ENCODE measurements at regions of chr20 and their contacts with region 1.

Region 1: GRCh38 chr20:41339507-41340326 is 904 bp upstream of the LPIN3 start:
- DNase-seq: peak; percentile 60 to 71
- ATAC-seq: peak; percentile 73 to 74
- H3K4me3 ChIP-seq: peak overlapping the region; percentile 23 to 52 (median 40)
- H3K27ac ChIP-seq: peak overlapping the region; percentile 65 to 77 (median 70)
- H3K4me1 ChIP-seq: peaks cover 6 to 8% of the 10 kb centered on the region in 2 donors
- H3K27me3 ChIP-seq: no peaks in the 10 kb centered on the region
- CTCF ChIP-seq: peak; percentile 98 to 100 (median 99)
- POLR2A ChIP-seq: no peak

Region 2: GRCh38 chr20:40990542-40991120 is 349.1 kb before region 1 on chr20:
- in situ Hi-C with region 1: loop called in 3 of 4 experiments (anchors 25 kb)
- intact Hi-C with region 1: loop called (anchors 5 kb)
- DNase-seq: peak; percentile 52 to 66
- ATAC-seq: peak; percentile 96 to 98
- H3K4me3 ChIP-seq: no peak overlapping the region
- H3K27ac ChIP-seq: no peak overlapping the region
- H3K4me1 ChIP-seq: no peaks in the 10 kb centered on the region
- H3K27me3 ChIP-seq: no peaks in the 10 kb centered on the region
- CTCF ChIP-seq: peak; percentile 34 to 83 (median 75)
- POLR2A ChIP-seq: no peak

Region 3: DNA sequence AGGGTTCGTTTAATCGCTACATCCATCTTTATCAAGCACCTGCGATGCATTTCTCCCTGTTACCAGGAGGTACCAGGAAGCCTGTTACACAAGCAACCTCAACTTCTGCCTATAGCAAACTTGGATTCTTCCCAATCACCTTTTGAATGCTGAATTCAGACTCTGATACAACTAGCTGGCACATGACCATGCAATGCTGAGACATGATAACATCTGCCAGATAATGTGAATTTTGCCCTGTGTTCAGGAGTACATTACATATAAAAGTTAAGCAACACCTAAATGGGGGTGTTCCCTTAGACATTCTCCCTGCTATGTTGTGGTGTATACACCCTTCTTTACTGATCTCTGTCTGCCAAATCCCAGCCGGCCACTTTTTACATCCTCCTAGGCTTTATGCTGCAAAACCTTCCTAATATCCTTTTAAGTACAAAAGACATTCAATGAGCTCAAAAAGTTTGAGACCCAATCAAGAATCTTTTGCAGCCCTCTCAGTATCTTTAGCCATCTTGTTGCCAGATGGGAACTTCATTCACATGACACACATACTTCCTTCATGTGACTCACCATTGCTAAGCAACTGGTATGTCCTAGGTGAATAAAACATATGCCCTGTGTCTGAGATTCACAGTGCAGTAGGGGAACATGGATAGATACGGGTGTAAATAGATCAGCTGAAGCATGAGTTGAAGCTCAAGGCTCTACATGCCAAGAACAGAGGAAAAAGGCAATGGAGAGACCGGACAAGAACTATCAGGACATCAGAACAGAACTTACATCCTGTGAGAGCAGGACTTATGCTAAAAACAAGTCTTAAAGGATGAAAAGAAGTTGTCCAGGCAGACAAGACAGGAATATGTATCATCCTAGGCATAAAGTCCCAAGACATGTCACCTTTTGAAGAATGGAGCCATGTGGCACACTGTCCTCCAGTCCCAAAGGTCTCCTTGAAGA is 106.5 kb before region 1 on chr20:
- in situ Hi-C with region 1: loop called in 2 of 4 experiments (anchors 5 to 10 kb)
- intact Hi-C with region 1: loop called (anchors 1 kb)
- DNase-seq: no peak
- ATAC-seq: peak; percentile 54 to 72
- H3K4me3 ChIP-seq: peak overlapping the region in 3 of 4 donors; percentile 20 to 39 (median 28)
- H3K27ac ChIP-seq: peak overlapping the region; percentile 78 to 91 (median 86)
- H3K4me1 ChIP-seq: peaks cover 65% of the 10 kb centered on the region in 2 donors
- H3K27me3 ChIP-seq: no peaks in the 10 kb centered on the region
- CTCF ChIP-seq: no peak
- POLR2A ChIP-seq: no peak

Region 4: DNA sequence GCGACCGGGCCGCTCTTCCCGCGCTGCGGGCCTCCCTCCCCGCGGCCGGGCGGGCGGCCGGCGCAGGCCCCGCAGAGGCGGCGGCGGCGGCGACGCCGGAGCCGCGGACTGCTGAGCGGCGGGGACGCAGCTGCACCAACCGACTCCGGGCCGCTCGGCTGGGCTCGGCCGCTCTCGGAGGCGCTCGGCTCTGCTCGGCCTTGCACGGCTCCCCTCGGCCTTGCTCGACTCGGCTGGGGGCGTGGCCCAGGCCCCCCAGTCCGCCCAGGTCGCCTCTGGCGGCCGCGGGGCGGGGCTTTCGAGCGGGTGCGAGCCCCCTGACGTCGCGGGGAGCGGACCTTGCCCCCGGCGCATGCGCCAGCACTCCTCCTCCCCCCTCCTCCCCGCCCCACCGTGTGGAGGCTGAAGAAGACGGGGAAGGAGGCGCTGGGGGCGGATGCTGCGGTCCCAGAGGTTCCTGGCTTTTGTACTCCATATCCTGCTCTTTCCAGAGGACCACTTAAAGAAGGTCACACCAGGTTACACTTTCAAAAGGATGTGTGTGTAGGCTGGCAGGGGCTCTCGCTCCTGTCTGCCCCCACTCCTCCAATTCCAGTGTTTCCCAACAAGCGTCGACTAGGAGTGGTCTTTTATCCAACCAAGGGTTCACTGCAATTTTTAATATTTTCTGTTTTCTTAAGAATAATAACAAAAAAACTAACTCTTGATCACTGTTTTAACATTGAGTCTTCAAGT is 22.0 kb before region 1 on chr20 and contains the start of gene ZHX3:
- in situ Hi-C with region 1: no loop called
- intact Hi-C with region 1: loop called (anchors 2 kb)
- DNase-seq: peak; percentile 92 to 95
- ATAC-seq: peak; percentile 89
- H3K4me3 ChIP-seq: peak within 1 kb of the TSS; percentile 77 to 95 (median 80)
- H3K27ac ChIP-seq: peak within 1 kb of the TSS; percentile 84 to 96 (median 91)
- H3K4me1 ChIP-seq: peaks cover 37 to 40% of the 10 kb centered on the region in 2 donors
- H3K27me3 ChIP-seq: no peaks in the 10 kb centered on the region
- CTCF ChIP-seq: no peak
- POLR2A ChIP-seq: peak; percentile 70 to 85
- total RNA-seq, gene ZHX3: 20.1 to 30.0 (median 25.9) TPM

Region 5: GRCh38 chr20:41693136-41693979 is 353.6 kb after region 1 on chr20:
- in situ Hi-C with region 1: loop called in 1 of 4 experiments (anchors 10 kb)
- intact Hi-C with region 1: no loop called
- DNase-seq: peak; percentile 78 to 84
- ATAC-seq: peak; percentile 91 to 94
- H3K4me3 ChIP-seq: peak overlapping the region; percentile 77 to 92 (median 78)
- H3K27ac ChIP-seq: peak overlapping the region; percentile 83 to 97 (median 91)
- H3K4me1 ChIP-seq: peaks cover 10 to 15% of the 10 kb centered on the region in 2 donors
- H3K27me3 ChIP-seq: no peaks in the 10 kb centered on the region
- CTCF ChIP-seq: peak in 4 of 5 experiments; percentile 22 to 68 (median 58)
- POLR2A ChIP-seq: peak; percentile 68 to 69

Measured in gastrocnemius medialis (tissue), 4 donors.